Mammary epithelial cell (primary cell): ENCODE measurements at regions of chr4 and their contacts with region 1.

Region 1: GRCh38 chr4:16196478-16197393 is 29.5 kb downstream of the TAPT1 start:
- DNase-seq: peak; percentile 72
- H3K4me3 ChIP-seq: peak overlapping the region; percentile 22 to 35 (median 26)
- H3K27ac ChIP-seq: peak overlapping the region; percentile 71
- H3K4me1 ChIP-seq: peaks cover 14% of the 10 kb centered on the region
- H3K27me3 ChIP-seq: no peaks in the 10 kb centered on the region
- CTCF ChIP-seq: peak; percentile 25 to 55

Region 2: DNA sequence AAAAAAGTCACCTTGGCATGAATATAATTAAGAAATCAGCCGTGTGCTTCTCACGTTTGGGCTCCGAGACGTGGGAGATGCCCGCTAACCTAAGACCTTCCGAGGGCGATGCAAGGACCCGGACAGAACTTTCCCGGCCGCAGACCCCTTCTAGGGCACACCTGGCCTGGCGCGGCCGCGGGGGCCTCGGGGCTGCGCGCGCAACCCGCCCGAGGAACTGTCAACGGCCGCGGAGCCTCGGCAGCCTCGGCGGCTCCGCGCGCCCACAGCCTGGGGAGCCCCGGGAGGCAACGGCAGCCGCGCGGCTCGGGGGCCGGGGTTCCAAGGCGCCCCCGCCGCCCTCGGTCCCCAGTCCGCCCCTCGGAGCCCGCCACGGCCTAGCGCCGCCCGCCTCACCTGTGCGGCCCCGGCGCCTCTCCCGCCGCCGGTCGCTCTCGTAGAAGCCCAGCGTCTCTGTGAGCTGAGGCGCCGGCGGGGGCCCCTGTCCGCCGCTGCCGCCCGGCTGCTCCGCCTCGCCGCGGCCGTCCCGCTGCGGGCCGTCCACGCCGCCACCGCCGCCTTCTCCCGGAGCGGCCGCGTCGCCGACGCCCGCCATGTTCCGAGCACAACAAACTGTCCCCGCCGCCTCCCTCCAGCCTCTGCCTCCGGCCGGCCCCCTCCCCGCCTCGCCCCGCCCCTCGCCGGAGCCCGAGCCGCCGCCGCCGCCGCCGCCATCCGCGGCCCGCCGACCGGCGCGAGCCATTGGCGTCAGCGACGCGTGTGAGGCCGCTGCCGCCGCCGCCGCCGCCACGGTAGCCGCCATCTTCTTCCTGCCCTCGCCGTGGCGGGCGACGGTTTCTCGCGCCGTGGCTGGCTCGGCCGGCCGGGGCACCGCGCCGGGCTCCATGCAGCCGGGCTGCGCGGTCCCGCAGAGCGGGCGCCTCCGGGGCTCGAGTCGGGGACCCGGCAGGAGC is 29.4 kb after region 1 on chr4 and contains the start of gene TAPT1:
- CTCF ChIA-PET with region 1: no interaction called
- dilution Hi-C with region 1: no loop called
- in situ Hi-C with region 1: no loop called
- intact Hi-C with region 1: loop called (anchors 2 kb)
- DNase-seq: peak; percentile 57
- H3K4me3 ChIP-seq: peak within 1 kb of the TSS; percentile 58 to 93 (median 92)
- H3K27ac ChIP-seq: peak within 1 kb of the TSS; percentile 45
- H3K4me1 ChIP-seq: no peaks in the 10 kb centered on the region
- H3K27me3 ChIP-seq: no peaks in the 10 kb centered on the region
- CTCF ChIP-seq: no peak
- total RNA-seq, gene TAPT1: 16.2 to 21.1 TPM